ENCODE measurements at regions of chr14 and their contacts with region 1.

Region 1: GRCh38 chr14:80987235-80988032 is 32.0 kb downstream of the TSHR start:
- DNase-seq: peak; percentile 79
- ATAC-seq: peak; percentile 81
- H3K4me3 ChIP-seq: no peak overlapping the region
- H3K4me3 Mint-ChIP-seq: no peak overlapping the region
- H3K27ac ChIP-seq: no peak overlapping the region
- H3K27ac Mint-ChIP-seq: no peak overlapping the region
- H3K4me1 ChIP-seq: peaks cover 3 to 6% of the 10 kb centered on the region in 2 donors
- H3K4me1 Mint-ChIP-seq: no peaks in the 10 kb centered on the region
- H3K27me3 ChIP-seq: peaks cover 0 to 2% (median 0%) of the 10 kb centered on the region in 4 experiments
- H3K27me3 Mint-ChIP-seq: peaks cover 17% of the 10 kb centered on the region
- CTCF ChIP-seq: peak; percentile 100

Region 2: DNA sequence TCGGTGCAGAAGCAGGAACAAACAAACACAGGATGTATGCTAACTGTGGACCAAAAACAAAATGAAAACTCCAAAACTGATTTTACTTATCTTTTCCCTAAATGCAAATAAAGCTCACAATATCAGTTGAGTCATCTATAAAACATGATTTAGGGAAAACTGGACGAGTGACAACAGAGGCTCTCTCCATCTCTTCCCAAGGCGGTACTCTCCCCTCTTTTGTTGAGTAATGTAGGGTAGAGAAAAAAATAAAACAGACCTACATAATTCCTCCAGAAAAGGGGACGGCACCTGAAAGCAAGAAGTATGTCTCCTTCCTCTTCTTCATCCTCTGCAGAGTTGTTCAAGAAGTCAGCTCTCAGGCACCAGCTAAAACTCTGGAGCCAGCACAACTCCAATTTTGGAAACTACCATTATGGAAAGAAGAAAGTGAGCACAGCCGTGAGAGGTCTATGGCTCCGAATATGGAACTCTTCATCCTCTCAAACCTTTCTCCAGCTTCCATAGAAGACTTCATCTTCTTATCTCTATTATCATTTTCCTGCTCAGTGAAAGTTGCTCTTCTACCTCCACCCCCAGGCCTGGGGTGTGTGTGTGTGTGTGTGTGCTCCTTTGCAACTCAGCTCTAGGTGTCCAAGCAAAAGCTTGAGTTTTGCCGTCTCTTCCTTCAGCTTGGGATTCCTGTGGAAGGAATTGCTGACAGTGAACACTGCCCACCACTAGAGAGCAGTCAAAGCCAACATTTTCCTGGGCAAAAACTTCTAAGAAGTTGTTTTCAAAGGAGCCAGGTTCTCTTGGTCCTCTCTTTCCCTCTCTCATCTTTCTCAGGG is 931.6 kb before region 1 on chr14:
- CTCF ChIA-PET with region 1: no interaction called
- POLR2A ChIA-PET with region 1: no interaction called
- intact Hi-C with region 1: loop called (anchors 5 kb)
- DNase-seq: no peak
- ATAC-seq: no peak
- H3K4me3 ChIP-seq: no peak overlapping the region
- H3K4me3 Mint-ChIP-seq: no peak overlapping the region
- H3K27ac ChIP-seq: no peak overlapping the region
- H3K27ac Mint-ChIP-seq: no peak overlapping the region
- H3K4me1 ChIP-seq: no peaks in the 10 kb centered on the region
- H3K4me1 Mint-ChIP-seq: no peaks in the 10 kb centered on the region
- H3K27me3 ChIP-seq: no peaks in the 10 kb centered on the region
- H3K27me3 Mint-ChIP-seq: no peaks in the 10 kb centered on the region
- CTCF ChIP-seq: no peak

Region 3: GRCh38 chr14:80941241-80942182 is 45.9 kb before region 1 on chr14 and contains the start of gene CEP128:
- CTCF ChIA-PET with region 1: interaction called, 12 read pairs
- POLR2A ChIA-PET with region 1: no interaction called
- intact Hi-C with region 1: loop called (anchors 1 kb)
- DNase-seq: peak; percentile 80
- ATAC-seq: peak; percentile 92
- H3K4me3 ChIP-seq: peak within 1 kb of the TSS; percentile 71 to 83 (median 71)
- H3K4me3 Mint-ChIP-seq: peak within 1 kb of the TSS; percentile 84
- H3K27ac ChIP-seq: peak within 1 kb of the TSS; percentile 15 to 59
- H3K27ac Mint-ChIP-seq: peak within 1 kb of the TSS; percentile 71
- H3K4me1 ChIP-seq: peaks cover 15 to 18% of the 10 kb centered on the region in 2 donors
- H3K4me1 Mint-ChIP-seq: peaks cover 19% of the 10 kb centered on the region
- H3K27me3 ChIP-seq: no peaks in the 10 kb centered on the region
- H3K27me3 Mint-ChIP-seq: no peaks in the 10 kb centered on the region
- CTCF ChIP-seq: no peak
- total RNA-seq, gene CEP128: 31.6 and 34.8 TPM in 2 replicates

Region 4: DNA sequence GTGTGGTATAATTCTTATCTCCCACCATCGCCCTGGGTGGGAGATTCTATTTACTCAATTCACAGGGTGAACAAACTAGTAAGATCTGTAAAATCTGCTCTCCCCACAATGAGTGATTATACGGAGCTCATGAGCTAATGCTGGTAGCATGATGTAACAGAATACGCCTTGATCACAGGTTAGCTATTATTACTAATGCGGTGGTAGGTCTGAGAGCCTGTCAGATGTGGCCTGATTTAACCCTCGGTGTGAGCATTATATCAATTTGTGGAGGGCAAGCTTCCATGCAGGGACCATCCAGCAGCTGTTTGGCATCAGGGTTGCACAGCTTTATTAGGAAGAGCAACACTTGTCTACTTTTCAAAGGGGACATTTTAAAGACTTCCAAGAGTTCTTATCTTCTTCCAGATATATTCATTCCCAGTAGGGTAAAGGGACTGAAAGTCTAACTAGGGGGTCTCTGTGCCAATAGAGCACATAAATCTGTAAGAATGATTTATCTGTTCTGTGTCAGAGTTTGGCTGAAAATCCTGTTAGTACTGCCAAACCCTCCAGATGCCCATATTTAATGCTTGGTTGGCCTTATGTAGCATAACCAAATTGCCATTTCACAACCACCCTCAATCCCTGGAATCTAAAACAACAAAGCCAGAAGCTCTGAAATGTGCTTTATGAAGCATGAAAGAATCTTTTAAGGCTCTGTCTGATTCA is 13.3 kb before region 1 on chr14:
- CTCF ChIA-PET with region 1: interaction called, 87 read pairs
- POLR2A ChIA-PET with region 1: no interaction called
- intact Hi-C with region 1: no loop called
- DNase-seq: no peak
- ATAC-seq: no peak
- H3K4me3 ChIP-seq: no peak overlapping the region
- H3K4me3 Mint-ChIP-seq: no peak overlapping the region
- H3K27ac ChIP-seq: no peak overlapping the region
- H3K27ac Mint-ChIP-seq: no peak overlapping the region
- H3K4me1 ChIP-seq: no peaks in the 10 kb centered on the region
- H3K4me1 Mint-ChIP-seq: no peaks in the 10 kb centered on the region
- H3K27me3 ChIP-seq: no peaks in the 10 kb centered on the region
- H3K27me3 Mint-ChIP-seq: peaks cover 17% of the 10 kb centered on the region
- CTCF ChIP-seq: no peak

Region 5: GRCh38 chr14:81033698-81034240 is 46.3 kb after region 1 on chr14:
- CTCF ChIA-PET with region 1: no interaction called
- POLR2A ChIA-PET with region 1: no interaction called
- intact Hi-C with region 1: no loop called
- DNase-seq: no peak
- ATAC-seq: no peak
- H3K4me3 ChIP-seq: no peak overlapping the region
- H3K4me3 Mint-ChIP-seq: no peak overlapping the region
- H3K27ac ChIP-seq: no peak overlapping the region
- H3K27ac Mint-ChIP-seq: no peak overlapping the region
- H3K4me1 ChIP-seq: no peaks in the 10 kb centered on the region
- H3K4me1 Mint-ChIP-seq: no peaks in the 10 kb centered on the region
- H3K27me3 ChIP-seq: no peaks in the 10 kb centered on the region
- H3K27me3 Mint-ChIP-seq: peaks cover 7% of the 10 kb centered on the region
- CTCF ChIP-seq: no peak

Region 6: GRCh38 chr14:81170104-81170828 is 182.8 kb after region 1 on chr14:
- CTCF ChIA-PET with region 1: interaction called, 27 read pairs
- POLR2A ChIA-PET with region 1: no interaction called
- intact Hi-C with region 1: loop called (anchors 2 kb)
- DNase-seq: peak; percentile 91
- ATAC-seq: peak; percentile 97
- H3K4me3 ChIP-seq: peak overlapping the region; percentile 39 to 73 (median 63)
- H3K4me3 Mint-ChIP-seq: peak overlapping the region; percentile 94
- H3K27ac ChIP-seq: peak overlapping the region; percentile 71 to 73
- H3K27ac Mint-ChIP-seq: peak overlapping the region; percentile 97
- H3K4me1 ChIP-seq: peaks cover 16 to 21% of the 10 kb centered on the region in 2 donors
- H3K4me1 Mint-ChIP-seq: peaks cover 46% of the 10 kb centered on the region
- H3K27me3 ChIP-seq: no peaks in the 10 kb centered on the region
- H3K27me3 Mint-ChIP-seq: no peaks in the 10 kb centered on the region
- CTCF ChIP-seq: peak; percentile 92

Region 7: GRCh38 chr14:81211844-81212243 is 224.4 kb after region 1 on chr14:
- CTCF ChIA-PET with region 1: interaction called, 7 read pairs
- POLR2A ChIA-PET with region 1: no interaction called
- intact Hi-C with region 1: loop called (anchors 2 kb)
- DNase-seq: peak; percentile 64
- ATAC-seq: peak; percentile 75
- H3K4me3 ChIP-seq: no peak overlapping the region
- H3K4me3 Mint-ChIP-seq: no peak overlapping the region
- H3K27ac ChIP-seq: peak overlapping the region in 1 of 2 donors; percentile 3
- H3K27ac Mint-ChIP-seq: no peak overlapping the region
- H3K4me1 ChIP-seq: peaks cover 17 to 22% of the 10 kb centered on the region in 2 donors
- H3K4me1 Mint-ChIP-seq: peaks cover 52% of the 10 kb centered on the region
- H3K27me3 ChIP-seq: no peaks in the 10 kb centered on the region
- H3K27me3 Mint-ChIP-seq: no peaks in the 10 kb centered on the region
- CTCF ChIP-seq: peak; percentile 75

Measured in B cell (primary cell).